ENCODE measurements at regions of chr1 and their contacts with region 1.

Region 1: GRCh38 chr1:41573785-41574713 is 89.6 kb upstream of the EDN2 start:
- DNase-seq: peak; percentile 91
- H3K4me3 Mint-ChIP-seq: no peak overlapping the region
- H3K27ac Mint-ChIP-seq: no peak overlapping the region
- H3K4me1 Mint-ChIP-seq: peaks cover 31% of the 10 kb centered on the region
- H3K27me3 Mint-ChIP-seq: no peaks in the 10 kb centered on the region

Region 2: DNA sequence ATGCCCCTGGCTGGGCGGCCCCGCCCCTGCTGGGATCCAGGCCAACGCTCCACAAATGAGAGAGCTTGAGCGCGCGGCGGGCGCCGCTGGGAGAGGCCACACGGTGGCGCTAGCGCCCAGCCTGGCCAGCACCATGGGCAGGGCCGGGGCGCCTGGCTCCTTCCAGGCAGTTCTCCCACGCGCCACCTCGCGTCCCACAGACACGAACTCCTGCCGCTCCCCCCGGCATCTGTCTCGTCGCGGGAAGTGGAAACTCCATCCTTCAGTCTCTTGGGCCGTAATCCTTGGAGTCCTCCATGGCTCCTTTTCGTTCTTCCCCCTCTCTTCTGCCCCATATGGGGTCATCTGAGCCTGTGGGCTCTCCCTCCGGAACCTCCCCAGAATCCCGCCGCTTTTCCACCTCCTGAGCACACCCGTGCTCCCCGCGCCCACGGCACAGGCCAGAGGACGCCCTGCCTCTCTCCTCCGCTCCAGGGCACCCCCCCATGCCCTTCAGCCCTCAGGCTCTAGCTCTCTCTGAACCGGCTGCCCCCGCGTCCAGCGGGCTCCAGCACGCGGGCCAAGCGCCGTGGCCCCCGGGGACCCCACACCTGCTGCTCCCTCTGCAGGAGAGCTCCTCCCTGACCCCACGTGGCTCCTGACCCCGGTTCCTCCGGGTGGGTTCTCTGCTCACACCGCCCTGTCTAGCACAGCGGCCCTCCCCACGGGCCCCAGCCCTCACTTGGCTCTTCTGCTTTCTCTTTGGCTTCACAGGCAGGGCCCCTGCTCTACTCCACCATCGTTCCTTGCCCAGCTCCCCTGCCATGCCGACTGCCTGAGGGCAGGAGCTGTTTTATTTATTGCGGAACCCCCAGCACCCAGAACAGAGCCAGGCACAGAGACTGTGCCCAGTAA is 57.6 kb before region 1 on chr1:
- CTCF ChIA-PET with region 1: interaction called, 10 read pairs
- DNase-seq: peak; percentile 70
- H3K4me3 Mint-ChIP-seq: no peak overlapping the region
- H3K27ac Mint-ChIP-seq: no peak overlapping the region
- H3K4me1 Mint-ChIP-seq: peaks cover 7% of the 10 kb centered on the region
- H3K27me3 Mint-ChIP-seq: no peaks in the 10 kb centered on the region

Region 3: GRCh38 chr1:41683681-41684500 is 109.8 kb after region 1 on chr1:
- CTCF ChIA-PET with region 1: no interaction called
- DNase-seq: peak; percentile 57
- H3K4me3 Mint-ChIP-seq: peak overlapping the region; percentile 19
- H3K27ac Mint-ChIP-seq: peak overlapping the region; percentile 76
- H3K4me1 Mint-ChIP-seq: peaks cover 90% of the 10 kb centered on the region
- H3K27me3 Mint-ChIP-seq: no peaks in the 10 kb centered on the region

Region 4: GRCh38 chr1:41742219-41742618 is 168.2 kb after region 1 on chr1:
- CTCF ChIA-PET with region 1: no interaction called
- DNase-seq: no peak
- H3K4me3 Mint-ChIP-seq: no peak overlapping the region
- H3K27ac Mint-ChIP-seq: peak overlapping the region; percentile 12
- H3K4me1 Mint-ChIP-seq: peaks cover 79% of the 10 kb centered on the region
- H3K27me3 Mint-ChIP-seq: no peaks in the 10 kb centered on the region

Region 5: GRCh38 chr1:41780916-41781315 is 206.9 kb after region 1 on chr1:
- CTCF ChIA-PET with region 1: interaction called, 11 read pairs
- DNase-seq: no peak
- H3K4me3 Mint-ChIP-seq: no peak overlapping the region
- H3K27ac Mint-ChIP-seq: no peak overlapping the region
- H3K4me1 Mint-ChIP-seq: peaks cover 9% of the 10 kb centered on the region
- H3K27me3 Mint-ChIP-seq: peaks cover 11% of the 10 kb centered on the region

Region 6: DNA sequence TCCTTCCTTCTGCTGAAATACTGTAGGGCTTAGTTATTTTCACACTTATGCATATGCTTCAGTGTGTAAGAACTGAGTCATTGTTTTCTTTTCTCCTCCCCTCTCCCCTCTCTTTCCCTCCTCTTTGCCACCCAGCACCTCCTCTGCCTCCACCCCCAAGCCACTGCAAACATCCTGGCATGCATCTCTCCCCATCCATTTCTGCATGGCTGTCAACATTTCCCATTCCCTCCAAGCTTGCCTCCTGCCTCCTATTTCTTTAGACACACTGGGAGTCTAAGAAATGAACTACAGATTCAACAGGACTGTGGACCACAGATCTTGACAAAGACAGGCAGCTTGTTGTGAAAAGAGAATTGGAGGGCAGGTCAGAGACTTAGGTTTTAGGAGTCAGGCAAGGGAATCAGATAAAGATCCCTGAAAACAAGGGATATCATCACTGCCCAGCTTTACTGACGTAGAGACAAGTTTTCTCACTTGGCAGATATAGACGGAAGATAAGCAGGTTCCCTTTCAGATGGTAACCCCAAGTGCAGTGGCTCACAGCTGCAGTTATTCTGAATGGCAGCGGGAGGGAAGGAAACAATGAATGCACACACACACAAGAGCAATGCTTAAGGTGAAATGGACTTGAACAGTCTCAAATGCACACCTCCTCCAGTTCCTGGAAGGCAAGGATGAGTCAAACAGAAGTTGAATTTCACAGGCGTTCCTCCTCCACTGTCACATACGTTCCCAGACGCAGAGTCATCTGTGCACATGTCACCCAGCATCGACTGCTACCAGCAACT is 288.5 kb after region 1 on chr1:
- CTCF ChIA-PET with region 1: interaction called, 22 read pairs
- DNase-seq: peak; percentile 49
- H3K4me3 Mint-ChIP-seq: no peak overlapping the region
- H3K27ac Mint-ChIP-seq: peak overlapping the region; percentile 58
- H3K4me1 Mint-ChIP-seq: peaks cover 32% of the 10 kb centered on the region
- H3K27me3 Mint-ChIP-seq: peaks cover 4% of the 10 kb centered on the region

Region 7: GRCh38 chr1:42173155-42173933 is 599.3 kb after region 1 on chr1:
- CTCF ChIA-PET with region 1: interaction called, 29 read pairs
- DNase-seq: peak; percentile 74
- H3K4me3 Mint-ChIP-seq: no peak overlapping the region
- H3K27ac Mint-ChIP-seq: no peak overlapping the region
- H3K4me1 Mint-ChIP-seq: no peaks in the 10 kb centered on the region
- H3K27me3 Mint-ChIP-seq: no peaks in the 10 kb centered on the region

Measured in activated naive CD4-positive, alpha-beta T cell treated with anti-CD3 and anti-CD28 coated beads, Interleukin-2, amount 10 ng/mL, durations not matched to agents 7 days and 5 days (primary cell).